Esophagus squamous epithelium (tissue), 5 donors: ENCODE measurements at regions of chr15 and their contacts with region 1.

Region 1: DNA sequence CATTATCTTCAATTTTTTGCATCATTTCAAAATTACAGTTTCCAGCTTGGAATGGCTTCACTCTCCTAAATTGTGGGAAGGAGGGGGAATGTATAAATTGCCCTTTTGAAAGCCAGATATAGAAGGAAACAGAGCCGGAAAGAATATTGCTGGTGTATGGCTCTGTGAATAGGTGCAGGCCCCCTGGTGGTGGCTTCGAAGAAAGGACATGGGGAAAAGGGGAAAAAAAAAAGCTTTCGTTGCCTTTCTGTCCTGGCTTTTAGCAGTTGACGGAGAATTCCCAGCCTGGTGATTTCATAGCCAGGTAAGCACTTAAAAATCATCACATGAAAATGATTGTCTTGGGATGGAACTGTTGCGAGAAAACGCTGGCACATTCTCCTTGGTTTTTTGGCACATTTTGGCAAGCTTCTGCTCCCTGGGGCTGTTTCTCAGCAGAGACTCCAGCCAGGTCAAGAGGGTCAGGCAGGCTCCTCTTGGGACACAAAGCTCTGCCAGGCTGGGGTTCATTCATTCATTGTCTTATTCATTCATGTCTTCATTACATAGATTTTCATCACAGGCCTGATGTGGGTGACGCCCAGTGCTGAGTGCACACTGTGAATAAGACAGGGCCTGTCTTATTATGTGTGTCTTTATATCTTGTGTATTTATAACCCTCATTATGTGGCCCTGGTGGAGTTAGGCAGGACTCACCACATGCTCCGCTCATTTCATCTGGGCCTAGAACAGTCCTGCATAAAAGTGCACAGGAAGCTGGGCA is 300.0 kb upstream of the TPM1 start:
- DNase-seq: no peak
- H3K4me3 ChIP-seq: no peak overlapping the region
- H3K27ac ChIP-seq: peak overlapping the region in 3 of 4 donors; percentile 54 to 68 (median 59)
- H3K4me1 ChIP-seq: peaks cover 0 to 35% (median 4%) of the 10 kb centered on the region in 3 donors
- H3K27me3 ChIP-seq: no peaks in the 10 kb centered on the region
- CTCF ChIP-seq: peak; percentile 48 to 81 (median 70)
- POLR2A ChIP-seq: no peak

Region 2: GRCh38 chr15:62389885-62390790 is 352.5 kb before region 1 on chr15:
- intact Hi-C with region 1: loop called (anchors 10 kb)
- DNase-seq: no peak
- H3K4me3 ChIP-seq: peak within 1 kb of the TSS; percentile 76 to 97 (median 80)
- H3K27ac ChIP-seq: peak within 1 kb of the TSS; percentile 81 to 87 (median 84)
- H3K4me1 ChIP-seq: peaks cover 0 to 28% (median 9%) of the 10 kb centered on the region in 3 donors
- H3K27me3 ChIP-seq: peaks cover 0 to 13% (median 0%) of the 10 kb centered on the region in 4 donors
- CTCF ChIP-seq: peak in 1 of 6 experiments; percentile 26
- POLR2A ChIP-seq: peak in 2 of 4 donors; percentile 74 to 87